Mammary epithelial cell (primary cell): ENCODE measurements at regions of chr18 and their contacts with region 1.

Region 1: DNA sequence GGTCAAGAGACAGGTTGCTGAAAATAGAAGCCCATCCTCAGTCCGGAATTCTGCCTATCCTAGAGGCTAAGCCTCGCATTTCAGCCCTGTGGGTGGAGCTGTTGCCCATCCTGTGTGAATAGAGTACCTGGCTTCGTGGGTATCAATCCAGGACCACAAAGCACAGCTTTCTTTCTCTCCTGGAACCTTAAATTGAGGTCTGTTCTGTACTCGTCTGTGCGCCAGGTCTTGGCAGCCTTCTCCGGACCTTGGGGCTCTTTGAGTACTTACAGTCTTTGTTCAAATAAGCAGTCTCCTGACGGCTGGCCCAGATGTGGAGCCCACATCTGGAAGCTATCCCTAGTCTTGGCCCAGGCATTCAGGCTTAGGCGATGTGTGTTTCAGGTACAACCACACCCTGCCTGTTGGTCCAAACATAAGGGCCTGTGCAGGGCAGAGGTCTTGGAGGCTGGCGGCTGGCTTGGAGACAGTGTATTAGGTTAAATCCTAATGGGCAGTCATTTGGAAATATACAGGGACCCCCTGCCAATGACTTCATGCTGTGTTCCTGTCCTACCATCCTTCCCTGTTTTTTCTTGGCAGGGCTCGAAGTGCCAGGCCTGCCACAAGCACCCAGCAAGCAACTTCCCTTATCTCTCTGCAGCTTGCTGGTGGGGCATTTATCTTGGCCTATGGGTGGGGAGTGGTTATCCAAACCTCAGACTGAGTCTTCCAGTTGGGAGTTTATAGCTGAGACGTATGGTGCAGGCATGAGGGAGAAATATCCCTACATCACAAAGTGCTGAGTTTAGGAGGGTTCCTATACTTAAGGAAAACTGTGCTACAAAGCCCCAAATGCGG is 294.1 kb downstream of the BCL2 start:
- DNase-seq: peak; percentile 3
- H3K4me3 ChIP-seq: no peak overlapping the region
- H3K27ac ChIP-seq: no peak overlapping the region
- H3K4me1 ChIP-seq: no peaks in the 10 kb centered on the region
- H3K27me3 ChIP-seq: no peaks in the 10 kb centered on the region
- CTCF ChIP-seq: peak; percentile 45 to 50

Region 2: DNA sequence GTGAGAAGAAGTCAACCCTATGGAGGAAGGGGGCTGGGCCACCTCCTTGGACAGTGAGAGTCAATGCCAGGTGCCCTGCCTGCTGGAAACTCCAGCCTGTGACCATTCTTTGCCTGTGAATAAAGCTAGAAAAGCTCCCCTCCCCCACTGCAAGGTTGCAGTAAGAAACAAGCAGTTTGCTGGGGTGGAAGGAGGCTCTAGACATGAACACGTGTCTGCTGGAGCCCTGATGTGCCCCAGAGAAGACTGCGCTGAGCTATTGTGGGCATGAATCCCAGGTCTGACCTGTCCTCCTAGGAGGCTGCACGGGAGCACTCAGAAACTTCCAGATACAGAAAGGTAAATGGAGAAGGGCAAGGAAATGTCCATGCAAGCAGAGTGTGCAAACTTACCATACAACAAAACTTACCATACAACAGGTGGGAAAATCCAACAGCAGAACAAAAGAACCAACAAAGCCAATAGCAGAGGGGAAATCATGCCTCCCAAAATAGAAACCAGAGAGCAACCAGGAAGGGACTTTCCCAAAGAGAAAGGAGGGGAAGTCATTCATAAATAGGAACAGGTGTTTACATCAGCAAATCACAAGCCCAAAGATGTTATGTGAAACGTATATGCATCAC is 15.4 kb after region 1 on chr18:
- CTCF ChIA-PET with region 1: interaction called, 16 read pairs
- dilution Hi-C with region 1: no loop called
- in situ Hi-C with region 1: no loop called
- intact Hi-C with region 1: no loop called
- DNase-seq: no peak
- H3K4me3 ChIP-seq: no peak overlapping the region
- H3K27ac ChIP-seq: no peak overlapping the region
- H3K4me1 ChIP-seq: no peaks in the 10 kb centered on the region
- H3K27me3 ChIP-seq: no peaks in the 10 kb centered on the region
- CTCF ChIP-seq: no peak

Region 3: DNA sequence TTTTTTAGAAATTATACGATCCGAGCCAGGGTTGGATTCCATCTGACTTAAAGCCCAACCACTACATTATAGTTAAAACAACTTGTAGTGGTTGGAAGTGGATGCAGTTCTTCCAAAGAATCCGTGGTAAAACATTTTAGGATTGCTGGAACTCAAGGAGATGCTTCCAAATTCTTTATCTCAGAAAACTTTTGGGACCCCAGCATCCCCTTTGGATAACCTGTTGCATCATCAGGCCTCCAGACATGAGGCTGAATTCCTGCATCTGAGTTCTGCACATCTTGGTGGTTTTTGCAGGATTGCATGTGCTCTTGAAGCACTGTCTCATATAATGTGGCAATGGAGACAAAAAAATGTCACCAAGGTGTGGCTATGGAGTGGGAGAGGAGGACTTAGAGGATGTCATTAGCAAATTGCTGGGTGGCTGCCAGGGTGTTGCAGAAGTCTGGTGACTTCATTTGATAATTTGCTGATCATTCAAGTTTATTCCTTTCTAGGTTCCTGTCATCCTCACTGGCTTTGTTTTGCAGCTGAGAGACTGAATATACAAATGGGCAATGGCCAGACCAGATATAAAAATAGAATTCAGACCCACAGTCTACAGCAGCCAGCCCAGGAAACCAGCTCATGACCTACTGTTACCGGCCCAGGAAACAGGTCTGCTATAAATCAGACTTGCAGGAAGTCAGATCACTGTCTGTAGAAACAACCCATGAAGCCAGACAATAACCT is 86.4 kb after region 1 on chr18:
- CTCF ChIA-PET with region 1: no interaction called
- dilution Hi-C with region 1: no loop called
- in situ Hi-C with region 1: no loop called
- intact Hi-C with region 1: no loop called
- DNase-seq: no peak
- H3K4me3 ChIP-seq: no peak overlapping the region
- H3K27ac ChIP-seq: no peak overlapping the region
- H3K4me1 ChIP-seq: no peaks in the 10 kb centered on the region
- H3K27me3 ChIP-seq: no peaks in the 10 kb centered on the region
- CTCF ChIP-seq: no peak